PC-3 (cell line): ENCODE measurements at regions of chr12 and their contacts with region 1.

Region 1: GRCh38 chr12:117011988-117012805 is 87.0 kb downstream of the TESC start:
- DNase-seq: no peak
- ATAC-seq: peak; percentile 73
- H3K4me3 ChIP-seq: no peak overlapping the region
- H3K27ac ChIP-seq: no peak overlapping the region
- H3K4me1 ChIP-seq: no peaks in the 10 kb centered on the region
- H3K27me3 ChIP-seq: no peaks in the 10 kb centered on the region
- CTCF ChIP-seq: no peak

Region 2: DNA sequence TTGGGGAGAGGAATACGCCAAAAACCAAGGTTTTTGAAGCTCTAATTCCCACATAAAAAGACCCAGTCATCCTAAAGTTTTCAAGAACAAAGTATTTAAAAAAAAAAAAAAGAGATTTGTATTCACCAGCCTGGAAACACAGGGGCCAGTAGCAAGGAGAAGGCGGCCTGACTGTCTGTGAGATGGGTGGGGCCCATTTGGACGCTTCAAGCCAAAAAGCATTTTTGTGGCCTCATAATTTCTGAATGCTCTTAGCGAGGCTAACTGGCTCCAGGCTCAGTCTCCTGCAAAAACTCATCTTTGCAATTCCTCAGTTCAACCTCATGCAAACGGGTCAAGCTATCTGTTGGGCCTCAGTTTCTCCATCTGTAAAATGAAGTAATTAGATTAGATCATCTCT is 1248.8 kb before region 1 on chr12:
- CTCF ChIA-PET with region 1: no interaction called
- POLR2A ChIA-PET with region 1: interaction called, 13 read pairs
- intact Hi-C with region 1: no loop called
- DNase-seq: peak; percentile 49
- ATAC-seq: peak; percentile 79
- H3K4me3 ChIP-seq: no peak overlapping the region
- H3K27ac ChIP-seq: no peak overlapping the region
- H3K4me1 ChIP-seq: no peaks in the 10 kb centered on the region
- H3K27me3 ChIP-seq: peaks cover 34% of the 10 kb centered on the region
- CTCF ChIP-seq: no peak